ENCODE measurements at regions of chr3 and their contacts with region 1.

Region 1: DNA sequence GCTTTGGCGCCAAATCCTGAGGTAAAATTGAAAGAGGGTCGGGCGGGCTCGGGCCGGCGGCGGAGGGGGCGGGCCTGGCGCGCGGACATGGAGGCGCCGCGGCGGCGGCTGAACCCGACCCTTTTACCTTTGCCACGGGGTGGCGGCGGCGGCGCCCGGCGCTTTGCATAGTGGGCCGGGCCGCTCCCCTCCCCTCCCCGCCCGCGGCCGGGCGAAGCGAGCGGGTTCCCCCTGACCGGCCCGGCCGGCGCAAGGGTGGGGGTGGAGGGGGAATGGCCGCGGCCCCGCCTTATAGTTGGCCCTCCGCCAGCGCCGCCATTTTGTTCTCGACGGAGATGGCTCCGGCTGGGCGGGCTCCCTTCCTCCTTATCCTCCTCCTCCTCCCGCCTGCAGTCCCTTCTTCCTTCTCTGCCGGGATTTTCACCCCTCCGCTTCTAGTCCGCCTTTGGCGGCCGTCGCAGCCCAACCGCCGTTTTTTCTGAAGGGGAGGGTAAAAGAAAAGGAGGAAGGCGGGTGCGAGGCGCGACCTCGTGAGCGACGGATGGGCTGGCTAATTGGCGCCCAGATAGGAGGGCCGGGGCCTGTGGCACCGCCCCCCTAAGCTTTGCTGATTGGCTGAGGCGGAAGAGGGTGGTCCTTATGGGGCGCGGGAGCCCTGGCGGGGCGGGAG is 638 bp downstream of the NR2C2 start:
- DNase-seq: peak; percentile 97
- ATAC-seq: peak; percentile 97
- H3K4me3 Mint-ChIP-seq: peak overlapping the region; percentile 91
- H3K27ac Mint-ChIP-seq: peak overlapping the region; percentile 98
- H3K4me1 Mint-ChIP-seq: peaks cover 49% of the 10 kb centered on the region
- H3K27me3 Mint-ChIP-seq: no peaks in the 10 kb centered on the region

Region 2: GRCh38 chr3:14651440-14652251 is 296.4 kb before region 1 on chr3 and contains the start of gene CCDC174:
- CTCF ChIA-PET with region 1: no interaction called
- POLR2A ChIA-PET with region 1: interaction called, 4 read pairs
- intact Hi-C with region 1: loop called (anchors 1 kb)
- DNase-seq: peak; percentile 95
- ATAC-seq: peak; percentile 99
- H3K4me3 Mint-ChIP-seq: peak within 1 kb of the TSS; percentile 93
- H3K27ac Mint-ChIP-seq: peak within 1 kb of the TSS; percentile 96
- H3K4me1 Mint-ChIP-seq: peaks cover 40% of the 10 kb centered on the region
- H3K27me3 Mint-ChIP-seq: no peaks in the 10 kb centered on the region
- total RNA-seq, gene CCDC174: 16.2 to 18.2 TPM

Region 3: DNA sequence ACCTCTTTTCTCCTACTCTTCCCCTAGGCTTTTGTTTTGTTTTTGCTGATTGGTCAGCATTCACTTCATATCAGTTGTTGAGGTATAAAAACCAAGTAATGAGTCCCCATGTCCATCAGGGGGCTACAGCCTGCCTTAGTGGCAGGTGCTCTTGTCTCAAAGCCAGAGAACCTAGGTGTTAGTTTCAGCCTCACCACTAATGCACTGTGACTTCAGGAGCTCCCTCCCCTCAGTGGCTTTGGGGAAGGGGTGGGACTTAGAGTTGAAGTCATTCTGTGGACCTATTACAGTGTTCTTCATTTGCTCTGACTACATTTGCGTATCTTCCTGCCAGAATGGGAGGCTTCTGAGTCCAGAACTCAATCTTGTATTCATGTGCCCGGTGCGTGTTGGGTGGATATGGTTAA is 41.0 kb after region 1 on chr3:
- CTCF ChIA-PET with region 1: no interaction called
- POLR2A ChIA-PET with region 1: no interaction called
- intact Hi-C with region 1: loop called in 1 of 2 experiments (anchors 1 kb)
- DNase-seq: peak; percentile 72
- ATAC-seq: peak; percentile 100
- H3K4me3 Mint-ChIP-seq: no peak overlapping the region
- H3K27ac Mint-ChIP-seq: peak overlapping the region; percentile 32
- H3K4me1 Mint-ChIP-seq: peaks cover 45% of the 10 kb centered on the region
- H3K27me3 Mint-ChIP-seq: no peaks in the 10 kb centered on the region

Region 4: DNA sequence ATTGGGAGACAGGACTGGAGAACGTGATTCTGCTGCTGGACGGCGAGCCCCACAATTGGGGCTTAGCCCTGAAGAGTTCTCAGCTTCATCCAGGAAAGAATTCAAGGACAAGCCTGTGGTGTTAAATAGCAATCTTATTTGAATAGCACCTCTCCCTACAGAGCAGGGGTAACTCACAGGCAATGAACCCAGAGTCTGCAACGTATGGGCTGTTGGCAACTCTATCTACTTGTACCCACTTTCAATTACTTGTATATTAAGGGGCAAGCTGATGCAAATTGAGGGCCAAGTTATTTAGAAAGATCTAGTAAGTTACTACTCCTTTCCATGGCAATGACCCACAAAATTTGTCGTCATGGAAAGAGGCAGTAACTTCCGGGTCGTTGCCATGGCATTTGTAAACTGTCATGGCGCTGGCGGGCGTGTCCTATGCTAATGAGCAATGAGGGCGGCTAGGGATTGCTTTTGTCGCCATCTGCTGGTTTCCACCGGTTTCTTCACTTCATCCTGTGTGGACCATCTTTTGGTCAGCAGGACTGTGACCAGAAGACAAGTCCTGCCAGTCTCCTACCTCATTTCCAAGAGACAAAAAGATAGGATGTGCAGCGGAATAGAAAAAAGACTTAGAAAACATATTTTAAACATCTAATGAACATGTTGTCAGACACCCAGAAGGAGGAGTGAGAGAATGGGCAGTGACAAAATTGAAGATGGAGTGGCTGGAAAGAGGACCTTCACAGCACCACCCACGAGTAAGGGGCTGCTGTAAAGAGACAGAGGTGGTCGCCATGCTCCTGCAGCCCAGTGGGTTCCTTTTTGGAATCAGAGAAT is 430.2 kb after region 1 on chr3:
- CTCF ChIA-PET with region 1: no interaction called
- POLR2A ChIA-PET with region 1: no interaction called
- intact Hi-C with region 1: loop called in 1 of 2 experiments (anchors 1 kb)
- DNase-seq: peak; percentile 96
- ATAC-seq: peak; percentile 96
- H3K4me3 Mint-ChIP-seq: no peak overlapping the region
- H3K27ac Mint-ChIP-seq: peak overlapping the region; percentile 73
- H3K4me1 Mint-ChIP-seq: peaks cover 6% of the 10 kb centered on the region
- H3K27me3 Mint-ChIP-seq: no peaks in the 10 kb centered on the region

Region 5: GRCh38 chr3:15601397-15602145 is 653.5 kb after region 1 on chr3 and contains the starts of genes BTD and HACL1:
- CTCF ChIA-PET with region 1: no interaction called
- POLR2A ChIA-PET with region 1: no interaction called
- intact Hi-C with region 1: loop called in 1 of 2 experiments (anchors 1 kb)
- DNase-seq: peak; percentile 99
- ATAC-seq: peak; percentile 94
- H3K4me3 Mint-ChIP-seq: peak within 1 kb of the TSS; percentile 100
- H3K27ac Mint-ChIP-seq: peak within 1 kb of the TSS; percentile 98
- H3K4me1 Mint-ChIP-seq: peaks cover 41% of the 10 kb centered on the region
- H3K27me3 Mint-ChIP-seq: no peaks in the 10 kb centered on the region
- total RNA-seq, gene BTD: 3.8 to 4.4 TPM
- total RNA-seq, gene HACL1: 22.3 to 23.2 TPM